Vagina (tissue), 2 donors: ENCODE measurements at regions of chr19 and their contacts with region 1.

Region 1: DNA sequence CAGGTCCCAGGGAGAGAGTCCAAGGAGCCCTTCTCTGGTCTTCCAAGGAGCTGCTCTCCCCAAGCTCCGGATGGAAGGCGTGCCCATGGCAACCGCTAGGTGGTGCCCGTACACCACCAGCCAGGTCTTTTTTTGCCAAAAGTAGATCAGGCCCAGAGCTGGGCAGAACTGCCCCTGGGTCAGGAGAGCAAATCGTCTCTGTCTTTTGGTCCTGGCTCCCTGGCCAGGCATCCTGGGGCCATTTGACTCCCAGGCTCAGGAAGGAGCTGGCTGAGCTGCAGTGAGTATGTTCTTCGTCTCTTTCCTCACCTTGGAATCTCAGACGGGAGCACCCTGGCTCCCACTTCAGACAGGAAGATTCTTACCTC is 24.6 kb upstream of the BCL3 start:
- DNase-seq: no peak
- H3K4me3 ChIP-seq: no peak overlapping the region
- H3K27ac ChIP-seq: no peak overlapping the region
- H3K4me1 ChIP-seq: peaks cover 15% of the 10 kb centered on the region
- H3K27me3 ChIP-seq: no peaks in the 10 kb centered on the region
- CTCF ChIP-seq: peak; percentile 82 to 98 (median 97)
- POLR2A ChIP-seq: no peak

Region 2: GRCh38 chr19:44757735-44758505 is 34.0 kb after region 1 on chr19:
- intact Hi-C with region 1: loop called (anchors 5 kb)
- DNase-seq: no peak
- H3K4me3 ChIP-seq: peak overlapping the region; percentile 41 to 45
- H3K27ac ChIP-seq: peak overlapping the region; percentile 92
- H3K4me1 ChIP-seq: peaks cover 64% of the 10 kb centered on the region
- H3K27me3 ChIP-seq: no peaks in the 10 kb centered on the region
- CTCF ChIP-seq: no peak
- POLR2A ChIP-seq: no peak

Region 3: DNA sequence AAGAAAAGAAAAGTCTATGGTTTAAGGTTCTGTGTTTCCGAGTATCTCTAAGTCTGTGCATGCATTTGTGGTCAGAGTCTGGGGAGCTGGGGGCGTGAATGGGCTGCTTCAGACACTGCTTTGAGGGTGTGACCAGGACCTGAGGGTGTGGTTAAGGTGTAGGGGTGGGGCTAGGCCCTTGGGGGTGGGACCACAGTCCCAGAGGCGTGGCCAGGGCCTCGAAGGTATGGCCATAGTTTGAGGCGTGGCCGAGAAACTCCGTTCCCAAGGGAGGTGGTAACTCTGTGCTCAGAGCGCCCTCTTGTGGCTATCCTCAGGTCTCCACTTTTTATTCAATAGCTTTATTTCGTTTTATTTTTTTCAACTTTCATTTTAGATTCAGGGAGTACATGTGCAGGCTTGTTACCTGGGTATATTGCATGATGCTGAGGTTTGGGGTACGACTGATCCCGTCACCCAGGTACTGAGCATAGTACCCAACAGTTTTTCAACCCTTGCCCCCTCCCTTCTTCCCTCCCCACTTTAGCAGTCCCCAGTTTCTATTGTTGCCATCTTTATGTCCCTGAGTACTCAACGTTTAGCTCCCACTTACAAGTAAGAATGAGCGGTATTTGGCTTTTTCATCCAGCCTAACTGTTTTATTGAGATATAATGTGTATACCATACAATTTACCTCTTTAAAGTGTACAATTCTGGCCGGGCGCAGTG is 46.8 kb after region 1 on chr19:
- intact Hi-C with region 1: loop called (anchors 2 kb)
- DNase-seq: peak in 1 of 2 donors; percentile 93
- H3K4me3 ChIP-seq: no peak overlapping the region
- H3K27ac ChIP-seq: peak overlapping the region; percentile 17
- H3K4me1 ChIP-seq: peaks cover 8% of the 10 kb centered on the region
- H3K27me3 ChIP-seq: no peaks in the 10 kb centered on the region
- CTCF ChIP-seq: peak; percentile 86 to 91 (median 90)
- POLR2A ChIP-seq: no peak

Region 4: DNA sequence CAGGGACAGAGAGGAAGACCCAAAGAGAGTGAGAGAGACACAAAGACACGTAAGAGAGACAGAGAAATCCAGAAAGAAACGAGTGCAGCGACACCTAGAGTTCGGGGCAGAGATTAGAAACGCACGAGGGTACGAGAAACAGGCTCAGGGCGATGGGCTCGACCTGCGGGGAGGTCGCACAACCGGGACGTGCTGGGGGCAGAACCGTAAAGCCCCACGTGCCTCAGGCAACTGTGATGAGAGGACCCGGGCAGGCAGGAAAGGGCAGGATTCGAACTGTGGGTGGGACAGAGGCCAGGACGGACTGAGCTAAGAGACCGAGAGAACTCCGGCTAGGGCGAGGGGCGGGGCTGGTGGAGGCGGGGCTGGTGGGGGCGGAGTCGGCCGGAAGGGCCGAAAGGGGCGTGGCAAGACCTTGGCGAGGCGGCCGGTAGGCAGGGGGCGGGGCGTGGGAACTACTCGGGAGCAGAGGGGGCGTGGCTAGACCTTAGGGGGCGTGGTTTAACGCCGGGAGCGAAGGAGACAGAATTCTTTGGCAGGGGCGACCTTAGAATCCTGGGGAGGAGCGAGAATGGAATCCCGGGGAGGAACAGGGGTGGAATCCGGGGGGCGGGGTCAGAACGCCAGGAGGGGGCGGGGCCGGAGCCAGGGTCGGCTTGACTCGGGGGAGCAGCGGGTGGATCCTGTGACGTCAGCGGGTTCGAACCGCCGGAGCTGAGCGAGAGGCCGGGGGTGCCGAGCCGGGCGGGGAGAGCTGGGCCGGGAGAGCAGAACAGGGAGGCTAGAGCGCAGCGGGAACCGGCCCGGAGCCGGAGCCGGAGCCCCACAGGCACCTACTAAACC is 121.9 kb after region 1 on chr19 and contains the start of gene NECTIN2:
- intact Hi-C with region 1: loop called (anchors 10 kb)
- DNase-seq: peak; percentile 99
- H3K4me3 ChIP-seq: peak within 1 kb of the TSS; percentile 90 to 97
- H3K27ac ChIP-seq: peak within 1 kb of the TSS; percentile 94
- H3K4me1 ChIP-seq: peaks cover 55% of the 10 kb centered on the region
- H3K27me3 ChIP-seq: no peaks in the 10 kb centered on the region
- CTCF ChIP-seq: peak; percentile 49 to 78 (median 63)
- POLR2A ChIP-seq: peak; percentile 27 to 91
- total RNA-seq, gene NECTIN2: 72.9 TPM